ENCODE measurements at regions of chr1 and their contacts with region 1.

Region 1: GRCh38 chr1:222713091-222713961 is 962 bp downstream of the BROX start:
- DNase-seq: peak; percentile 89 to 99 (median 91)

Region 2: DNA sequence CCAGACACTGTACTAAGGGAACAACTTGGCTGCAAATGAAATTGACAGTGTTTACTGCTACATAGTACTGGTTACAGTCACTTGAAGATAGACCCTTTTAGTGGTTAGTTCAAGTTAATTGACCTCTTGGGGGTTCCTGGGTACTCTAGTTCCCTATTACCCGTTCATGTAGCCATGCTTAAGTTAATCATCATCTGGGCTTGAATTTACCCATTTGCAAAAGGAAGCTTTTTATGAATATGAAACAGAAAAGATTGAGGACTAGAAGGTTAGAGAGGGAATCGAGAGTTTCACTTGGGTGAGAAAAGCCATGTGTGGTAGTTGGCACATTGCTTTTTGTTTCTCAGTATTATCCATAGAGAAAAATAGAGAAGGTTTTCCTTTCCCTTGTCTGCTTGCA is 92.8 kb before region 1 on chr1:
- intact Hi-C with region 1: loop called (anchors 2 kb)
- DNase-seq: no peak

Region 3: DNA sequence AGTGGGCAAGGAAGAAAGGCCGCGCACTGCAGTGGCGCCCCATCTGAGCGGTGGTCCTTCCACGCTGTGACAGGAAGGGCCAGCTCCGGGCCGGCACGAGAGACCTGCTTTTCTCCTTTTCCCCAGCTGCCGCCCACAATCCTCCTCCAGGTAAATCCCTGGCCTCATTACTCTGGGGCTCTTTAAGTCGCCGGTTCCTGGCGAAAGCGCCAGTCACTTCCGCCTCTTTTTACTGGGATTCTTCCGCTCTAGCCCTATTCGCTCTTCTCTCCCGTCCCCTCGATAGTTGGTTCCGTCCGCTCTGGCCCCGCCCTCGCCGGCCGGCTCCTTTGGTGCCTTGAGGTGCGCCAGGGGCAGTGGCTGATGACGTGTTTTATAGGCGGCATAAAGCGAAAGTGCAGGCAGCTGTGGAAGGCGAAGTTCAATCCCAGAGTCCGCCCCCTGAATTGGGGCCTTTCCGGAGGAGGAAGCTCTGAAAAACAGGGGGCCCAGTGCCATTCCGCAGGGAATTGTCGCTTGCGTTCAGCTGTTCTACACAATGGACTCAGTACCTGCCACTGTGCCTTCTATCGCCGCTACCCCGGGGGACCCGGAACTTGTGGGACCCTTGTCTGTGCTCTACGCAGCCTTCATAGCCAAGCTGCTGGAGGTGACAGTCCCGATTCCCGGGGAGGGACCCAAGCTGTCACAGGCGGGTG is 69.2 kb before region 1 on chr1:
- intact Hi-C with region 1: loop called (anchors 2 kb)
- DNase-seq: peak; percentile 90 to 99 (median 95)

Region 4: GRCh38 chr1:223087291-223088255 is 374.2 kb after region 1 on chr1:
- intact Hi-C with region 1: no loop called
- DNase-seq: no peak